Right ventricle myocardium inferior (tissue), 1 donor: ENCODE measurements at regions of chr22 and their contacts with region 1.

Region 1: DNA sequence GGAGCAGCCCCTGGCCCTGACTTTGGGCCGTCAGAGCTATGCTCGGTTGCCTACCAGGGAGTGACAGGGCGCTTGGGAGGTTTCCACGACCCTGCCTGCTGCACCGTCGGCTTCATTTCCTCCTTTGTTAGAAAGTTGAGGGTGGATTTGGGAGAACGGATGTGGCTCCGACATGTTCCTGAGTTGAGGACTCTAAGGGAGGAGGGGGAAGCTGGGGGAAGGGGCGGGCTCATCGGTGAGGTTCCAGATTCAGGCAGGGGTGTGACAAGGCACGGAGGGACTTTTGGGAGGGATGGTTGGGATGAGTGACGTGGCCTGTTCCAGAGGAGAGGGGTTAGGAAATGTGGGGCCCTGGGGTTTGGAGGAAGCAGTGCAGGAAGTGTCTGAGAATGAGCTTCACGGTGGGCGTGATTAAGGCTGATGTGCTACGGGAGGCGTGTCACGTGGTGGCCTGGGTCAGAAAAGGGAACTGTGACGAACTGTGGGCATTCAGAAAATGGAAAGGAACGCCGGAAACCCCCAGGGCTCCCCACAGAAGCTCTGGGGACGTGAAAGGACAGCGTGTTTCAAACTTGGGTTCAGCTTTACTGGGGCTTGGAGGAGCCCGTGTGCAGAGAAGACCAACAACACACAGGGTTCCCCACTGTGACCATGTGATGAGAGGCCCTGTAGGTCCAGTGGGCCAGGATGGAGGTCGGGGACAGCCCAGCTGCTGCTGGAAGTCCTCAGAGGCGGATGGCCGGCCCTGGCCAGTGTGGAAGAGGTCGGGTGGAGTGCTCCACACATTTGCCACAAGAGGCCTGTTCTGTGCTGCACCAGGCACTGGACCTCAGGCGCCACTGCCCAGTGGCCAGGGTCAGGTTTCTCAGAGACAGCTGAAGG is 2.8 kb downstream of the PARVB start:
- DNase-seq: peak; percentile 92
- ATAC-seq: peak; percentile 52

Region 2: GRCh38 chr22:43998679-43999264 is 28.1 kb before region 1 on chr22:
- intact Hi-C with region 1: loop called (anchors 2 kb)
- DNase-seq: no peak
- ATAC-seq: peak; percentile 87

Region 3: DNA sequence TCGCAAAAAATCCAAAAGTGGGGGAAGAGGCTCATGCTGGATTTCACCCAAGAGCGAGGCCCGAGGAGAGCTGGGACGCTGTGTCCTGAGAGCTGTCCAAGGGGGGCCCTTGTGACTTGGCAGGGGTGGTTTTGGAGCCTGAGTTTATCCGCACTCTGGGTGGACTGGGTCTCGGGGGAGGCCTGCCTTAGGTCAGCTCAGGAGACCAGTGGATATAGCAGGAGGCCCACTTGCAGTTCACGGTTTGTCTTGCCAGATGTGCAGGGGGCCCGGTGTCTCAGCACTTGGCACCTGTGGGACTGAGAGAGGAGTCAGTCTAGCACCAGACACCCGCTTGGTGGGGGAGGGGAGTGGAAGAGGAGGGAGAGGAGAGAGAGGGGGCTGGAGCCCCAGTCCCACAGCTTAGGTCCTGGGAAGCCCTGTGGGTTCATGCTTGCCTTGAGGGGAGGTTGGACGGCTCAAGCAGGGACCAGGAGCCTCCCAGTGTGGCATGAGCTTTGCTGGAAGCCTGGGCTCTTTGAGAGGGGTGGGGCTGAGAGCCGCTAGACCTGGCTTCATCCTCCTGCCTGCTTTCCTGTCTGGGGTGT is 30.6 kb after region 1 on chr22:
- intact Hi-C with region 1: loop called (anchors 5 kb)
- DNase-seq: peak; percentile 91
- ATAC-seq: peak; percentile 96

Region 4: GRCh38 chr22:44068422-44069191 is 41.7 kb after region 1 on chr22:
- intact Hi-C with region 1: loop called (anchors 1 kb)
- DNase-seq: peak; percentile 81
- ATAC-seq: peak; percentile 59